B cell (primary cell): ENCODE measurements at regions of chr11 and their contacts with region 1.

Region 1: GRCh38 chr11:34234086-34234740 is 123.6 kb downstream of the ABTB2 start:
- DNase-seq: peak; percentile 87
- ATAC-seq: peak; percentile 93
- H3K4me3 ChIP-seq: no peak overlapping the region
- H3K4me3 Mint-ChIP-seq: peak overlapping the region; percentile 69
- H3K27ac ChIP-seq: peak overlapping the region; percentile 50 to 64
- H3K27ac Mint-ChIP-seq: peak overlapping the region; percentile 84
- H3K4me1 ChIP-seq: peaks cover 15 to 23% of the 10 kb centered on the region in 2 donors
- H3K4me1 Mint-ChIP-seq: peaks cover 41% of the 10 kb centered on the region
- H3K27me3 ChIP-seq: no peaks in the 10 kb centered on the region
- H3K27me3 Mint-ChIP-seq: no peaks in the 10 kb centered on the region
- CTCF ChIP-seq: no peak

Region 2: GRCh38 chr11:34126959-34127848 is 107.0 kb before region 1 on chr11:
- CTCF ChIA-PET with region 1: no interaction called
- POLR2A ChIA-PET with region 1: no interaction called
- intact Hi-C with region 1: no loop called
- DNase-seq: no peak
- ATAC-seq: no peak
- H3K4me3 ChIP-seq: no peak overlapping the region
- H3K4me3 Mint-ChIP-seq: no peak overlapping the region
- H3K27ac ChIP-seq: no peak overlapping the region
- H3K27ac Mint-ChIP-seq: no peak overlapping the region
- H3K4me1 ChIP-seq: no peaks in the 10 kb centered on the region
- H3K4me1 Mint-ChIP-seq: no peaks in the 10 kb centered on the region
- H3K27me3 ChIP-seq: no peaks in the 10 kb centered on the region
- H3K27me3 Mint-ChIP-seq: no peaks in the 10 kb centered on the region
- CTCF ChIP-seq: no peak

Region 3: GRCh38 chr11:34197256-34197655 is 37.0 kb before region 1 on chr11:
- CTCF ChIA-PET with region 1: no interaction called
- POLR2A ChIA-PET with region 1: no interaction called
- intact Hi-C with region 1: no loop called
- DNase-seq: no peak
- ATAC-seq: no peak
- H3K4me3 ChIP-seq: no peak overlapping the region
- H3K4me3 Mint-ChIP-seq: no peak overlapping the region
- H3K27ac ChIP-seq: no peak overlapping the region
- H3K27ac Mint-ChIP-seq: no peak overlapping the region
- H3K4me1 ChIP-seq: no peaks in the 10 kb centered on the region
- H3K4me1 Mint-ChIP-seq: no peaks in the 10 kb centered on the region
- H3K27me3 ChIP-seq: no peaks in the 10 kb centered on the region
- H3K27me3 Mint-ChIP-seq: no peaks in the 10 kb centered on the region
- CTCF ChIP-seq: no peak

Region 4: DNA sequence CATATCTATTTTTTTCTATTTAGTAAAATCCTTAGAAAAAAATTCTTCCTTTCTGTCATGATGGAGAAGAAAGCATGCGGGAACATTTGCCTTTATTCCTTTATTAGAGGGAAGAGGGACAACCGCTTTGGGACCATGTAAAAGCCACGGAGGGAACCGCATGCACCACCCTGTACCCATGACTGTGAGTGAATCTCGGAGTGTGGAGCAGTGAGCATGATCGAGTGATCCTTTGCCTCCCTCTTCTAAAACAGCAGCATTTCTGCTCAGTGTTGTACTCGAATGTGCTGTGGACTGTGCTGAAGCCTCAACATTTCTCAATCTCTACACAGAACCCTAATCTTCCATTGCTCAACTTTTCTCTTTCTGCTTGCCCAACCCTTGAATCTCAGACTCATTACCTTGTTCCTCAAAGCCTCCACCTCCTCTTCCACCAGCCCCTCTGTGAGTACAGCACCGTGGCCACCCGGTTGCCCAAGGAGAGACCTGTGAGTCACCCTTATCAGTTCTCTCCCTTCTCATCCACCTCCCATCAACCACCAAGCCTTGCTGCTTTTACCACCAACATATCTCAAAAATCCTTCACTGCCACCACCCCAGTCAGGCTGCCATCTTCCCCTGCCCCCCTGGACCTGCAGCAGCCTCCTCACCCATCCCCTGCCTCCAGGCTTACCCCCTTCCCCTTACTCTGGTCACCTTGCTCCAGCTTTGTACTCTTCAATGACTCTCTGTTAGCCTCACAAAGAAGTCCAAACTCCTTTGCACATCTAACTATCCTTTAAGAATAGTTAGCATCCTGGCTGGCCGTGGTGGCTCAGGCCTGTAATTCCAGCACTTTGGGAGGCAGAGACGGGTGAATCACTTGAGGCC is 25.7 kb before region 1 on chr11:
- CTCF ChIA-PET with region 1: no interaction called
- POLR2A ChIA-PET with region 1: no interaction called
- intact Hi-C with region 1: no loop called
- DNase-seq: no peak
- ATAC-seq: no peak
- H3K4me3 ChIP-seq: no peak overlapping the region
- H3K4me3 Mint-ChIP-seq: no peak overlapping the region
- H3K27ac ChIP-seq: no peak overlapping the region
- H3K27ac Mint-ChIP-seq: no peak overlapping the region
- H3K4me1 ChIP-seq: peaks cover under 1 to 3% of the 10 kb centered on the region in 2 donors
- H3K4me1 Mint-ChIP-seq: peaks cover 3% of the 10 kb centered on the region
- H3K27me3 ChIP-seq: no peaks in the 10 kb centered on the region
- H3K27me3 Mint-ChIP-seq: no peaks in the 10 kb centered on the region
- CTCF ChIP-seq: no peak

Region 5: DNA sequence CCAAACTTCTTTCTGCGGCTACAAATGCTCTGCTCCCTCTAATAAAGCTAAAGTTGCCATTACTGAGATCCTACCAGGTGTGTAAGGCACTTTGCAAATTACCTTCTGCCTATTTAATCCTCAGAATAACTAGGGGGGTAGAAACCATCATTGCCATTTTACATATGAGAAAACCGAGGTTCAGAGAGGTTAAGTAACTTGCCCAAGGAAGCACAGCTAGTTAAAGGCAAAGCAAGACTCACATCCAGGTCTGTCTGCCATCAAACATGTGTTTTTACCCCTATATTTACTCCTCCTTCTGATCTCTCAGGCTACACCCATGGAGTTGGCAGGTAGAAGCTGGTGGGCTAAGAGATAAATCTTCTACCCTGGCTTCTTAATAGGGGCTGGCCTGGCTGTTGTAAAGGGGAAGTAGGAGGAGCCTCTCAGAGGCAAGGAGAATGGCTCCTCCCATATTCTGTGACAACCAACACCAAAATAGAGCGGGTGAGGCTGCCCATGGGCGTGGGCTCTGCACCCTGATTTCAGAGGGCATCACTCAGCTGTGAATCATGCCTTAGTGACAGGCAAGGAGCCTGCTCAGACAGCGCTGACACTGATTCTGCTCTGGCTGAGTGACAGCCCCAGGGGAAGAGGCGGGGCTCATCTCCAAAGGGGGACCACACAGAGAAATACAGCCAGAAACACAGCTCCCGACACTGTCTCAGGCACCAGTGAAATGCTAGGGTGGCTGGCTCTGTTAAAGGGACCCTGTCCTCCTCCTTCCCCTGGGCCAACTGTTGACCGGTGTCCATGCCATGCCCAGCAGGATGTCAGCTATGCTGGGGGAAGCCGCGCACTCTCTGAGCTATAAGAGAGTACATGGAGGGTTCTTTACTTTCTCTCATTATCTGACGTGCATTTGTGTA is 16.8 kb after region 1 on chr11:
- CTCF ChIA-PET with region 1: interaction called, 6 read pairs
- POLR2A ChIA-PET with region 1: interaction called, 3 read pairs
- intact Hi-C with region 1: loop called (anchors 1 kb)
- DNase-seq: peak; percentile 93
- ATAC-seq: peak; percentile 99
- H3K4me3 ChIP-seq: peak overlapping the region in 4 of 5 experiments; percentile 13 to 59 (median 46)
- H3K4me3 Mint-ChIP-seq: peak overlapping the region; percentile 47
- H3K27ac ChIP-seq: peak overlapping the region; percentile 67 to 76
- H3K27ac Mint-ChIP-seq: peak overlapping the region; percentile 72
- H3K4me1 ChIP-seq: peaks cover 19 to 26% of the 10 kb centered on the region in 2 donors
- H3K4me1 Mint-ChIP-seq: peaks cover 36% of the 10 kb centered on the region
- H3K27me3 ChIP-seq: no peaks in the 10 kb centered on the region
- H3K27me3 Mint-ChIP-seq: no peaks in the 10 kb centered on the region
- CTCF ChIP-seq: no peak

Region 6: DNA sequence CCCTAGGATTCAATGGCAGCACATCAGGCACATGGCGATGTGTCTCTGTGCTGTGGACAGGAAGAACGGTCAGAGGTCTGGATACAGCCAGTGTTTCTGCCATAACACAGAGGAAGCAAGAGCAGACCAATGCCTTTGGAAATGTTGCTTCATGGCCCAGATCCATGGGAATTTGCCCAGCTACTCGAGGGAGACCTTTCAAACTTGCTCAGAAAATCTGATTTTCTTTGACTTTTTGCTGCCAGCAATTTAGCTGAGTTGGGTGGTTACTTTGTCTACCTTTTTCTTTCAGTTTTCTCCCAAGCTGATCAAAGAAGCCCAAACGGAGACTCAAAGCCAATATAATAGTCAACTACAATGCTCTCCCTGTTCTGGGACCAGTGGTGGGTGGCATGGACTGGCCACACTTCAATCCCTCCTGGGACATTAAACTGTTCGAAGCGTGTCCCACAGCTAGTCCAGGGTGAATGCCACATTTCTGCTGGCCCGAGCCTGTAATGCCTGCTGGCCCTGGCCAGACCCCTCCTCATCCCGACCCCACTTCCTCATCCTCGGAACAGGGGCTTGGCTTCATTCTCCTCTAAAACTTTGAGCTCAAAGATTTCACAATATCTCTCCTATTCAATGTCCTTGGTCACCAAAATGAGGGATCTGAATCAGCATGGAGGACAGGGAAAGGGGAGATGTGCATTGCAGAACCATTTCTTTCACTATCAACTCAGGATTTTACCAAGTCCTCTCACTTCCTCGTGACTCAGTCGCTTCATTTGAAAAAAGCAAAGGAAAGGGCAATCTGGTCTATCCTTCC is 30.3 kb after region 1 on chr11:
- CTCF ChIA-PET with region 1: no interaction called
- POLR2A ChIA-PET with region 1: interaction called, 12 read pairs
- intact Hi-C with region 1: no loop called
- DNase-seq: no peak
- ATAC-seq: no peak
- H3K4me3 ChIP-seq: no peak overlapping the region
- H3K4me3 Mint-ChIP-seq: no peak overlapping the region
- H3K27ac ChIP-seq: no peak overlapping the region
- H3K27ac Mint-ChIP-seq: no peak overlapping the region
- H3K4me1 ChIP-seq: no peaks in the 10 kb centered on the region
- H3K4me1 Mint-ChIP-seq: peaks cover 2% of the 10 kb centered on the region
- H3K27me3 ChIP-seq: no peaks in the 10 kb centered on the region
- H3K27me3 Mint-ChIP-seq: no peaks in the 10 kb centered on the region
- CTCF ChIP-seq: no peak

Region 7: DNA sequence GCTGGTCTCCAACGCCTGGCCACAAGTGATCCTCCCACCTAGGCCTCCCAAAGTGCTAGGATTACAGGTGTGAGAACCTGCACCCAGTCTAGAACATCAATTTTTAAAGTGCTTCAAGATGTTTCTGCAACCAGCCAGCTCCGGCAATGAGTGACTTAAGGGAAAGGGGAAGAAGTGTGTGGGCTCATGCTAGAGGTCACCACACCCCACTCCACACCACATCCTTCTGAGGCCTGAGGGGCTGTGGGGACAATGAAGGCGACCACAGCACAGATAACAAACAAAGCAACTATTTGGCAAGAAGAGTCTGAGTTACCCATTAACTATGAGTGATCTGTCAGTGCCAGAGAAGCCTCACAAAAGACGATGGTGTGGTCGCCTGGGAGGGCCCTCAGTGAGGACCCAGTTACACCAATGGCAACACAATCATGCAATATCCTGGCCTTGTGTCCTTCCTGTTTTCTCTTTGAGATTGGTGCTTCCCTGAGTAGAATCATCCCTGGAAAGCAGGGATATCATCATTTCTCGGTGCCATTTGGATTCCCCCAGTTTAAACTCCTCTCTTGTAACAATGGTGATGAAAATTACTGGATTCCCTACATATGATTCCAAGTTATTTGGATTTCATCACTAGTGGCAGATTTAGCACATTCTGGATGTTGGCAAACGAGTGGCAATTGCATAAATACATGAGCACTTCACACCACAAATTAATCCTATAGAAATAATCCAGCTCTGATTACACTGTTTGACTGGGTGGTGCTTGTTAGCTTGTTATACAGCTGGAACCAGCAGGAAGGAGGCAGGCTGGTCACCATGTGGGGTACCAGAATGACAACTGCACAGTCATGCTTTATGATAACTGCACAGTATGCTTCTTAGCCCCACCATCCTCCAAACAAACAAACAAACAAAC is 105.2 kb after region 1 on chr11:
- CTCF ChIA-PET with region 1: no interaction called
- POLR2A ChIA-PET with region 1: no interaction called
- intact Hi-C with region 1: no loop called
- DNase-seq: no peak
- ATAC-seq: no peak
- H3K4me3 ChIP-seq: no peak overlapping the region
- H3K4me3 Mint-ChIP-seq: no peak overlapping the region
- H3K27ac ChIP-seq: no peak overlapping the region
- H3K27ac Mint-ChIP-seq: no peak overlapping the region
- H3K4me1 ChIP-seq: no peaks in the 10 kb centered on the region
- H3K4me1 Mint-ChIP-seq: peaks cover 4% of the 10 kb centered on the region
- H3K27me3 ChIP-seq: no peaks in the 10 kb centered on the region
- H3K27me3 Mint-ChIP-seq: no peaks in the 10 kb centered on the region
- CTCF ChIP-seq: no peak